Activated CD4-positive, alpha-beta T cell treated with anti-CD3 and anti-CD28 coated beads for 36 hours (primary cell): ENCODE measurements at regions of chr6 and their contacts with region 1.

Region 1: GRCh38 chr6:138953451-138953850 is 34.6 kb downstream of the REPS1 start:
- DNase-seq: no peak
- ATAC-seq: peak; percentile 42
- H3K4me3 Mint-ChIP-seq: no peak overlapping the region
- H3K27ac Mint-ChIP-seq: no peak overlapping the region
- H3K4me1 Mint-ChIP-seq: peaks cover 73% of the 10 kb centered on the region
- H3K27me3 Mint-ChIP-seq: no peaks in the 10 kb centered on the region

Region 2: GRCh38 chr6:138970856-138971425 is 17.5 kb after region 1 on chr6:
- CTCF ChIA-PET with region 1: interaction called, 4 read pairs
- POLR2A ChIA-PET with region 1: no interaction called
- intact Hi-C with region 1: loop called in 1 of 2 experiments (anchors 2 kb)
- DNase-seq: peak; percentile 52
- ATAC-seq: peak; percentile 98
- H3K4me3 Mint-ChIP-seq: no peak overlapping the region
- H3K27ac Mint-ChIP-seq: peak overlapping the region; percentile 49
- H3K4me1 Mint-ChIP-seq: peaks cover 65% of the 10 kb centered on the region
- H3K27me3 Mint-ChIP-seq: no peaks in the 10 kb centered on the region

Region 3: DNA sequence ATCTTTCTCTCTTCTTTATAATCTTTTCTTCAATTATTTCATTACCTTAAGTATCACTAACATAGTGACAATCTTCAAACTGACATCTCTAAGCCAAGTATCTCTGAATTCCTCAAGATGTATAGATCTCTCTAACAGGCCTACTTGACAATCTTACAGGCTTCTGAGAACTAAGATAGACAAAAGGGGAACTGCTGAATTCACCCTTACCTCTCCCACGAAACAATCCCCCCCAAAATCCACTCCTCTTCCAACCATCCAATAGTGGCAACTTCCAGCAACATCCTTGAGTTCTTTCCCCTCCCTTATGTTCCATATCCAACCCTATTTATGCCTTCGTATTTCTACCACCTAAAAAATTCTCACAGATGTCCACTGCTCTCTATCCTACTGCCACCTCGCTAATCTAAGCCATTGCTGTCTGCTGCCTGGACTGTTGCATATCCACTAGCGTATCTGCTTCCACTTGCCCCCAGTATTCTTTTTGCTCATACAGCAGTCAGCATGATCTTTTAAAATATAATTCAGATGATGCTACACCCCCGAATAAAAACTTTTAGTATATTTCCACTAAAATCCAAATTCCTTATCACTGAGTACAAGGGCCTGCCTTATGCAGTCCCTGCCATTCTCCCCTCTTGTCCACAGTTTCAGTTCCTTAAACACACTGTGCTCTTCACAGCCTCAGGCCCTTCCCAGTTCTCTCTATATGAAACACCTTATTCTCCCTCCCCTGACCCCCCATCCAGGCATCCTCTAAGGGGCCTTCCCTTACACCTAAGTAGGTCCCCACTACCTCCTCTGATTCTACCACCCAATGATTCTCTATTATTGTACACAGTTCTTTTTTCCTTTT is 26.6 kb after region 1 on chr6:
- CTCF ChIA-PET with region 1: interaction called, 3 read pairs
- POLR2A ChIA-PET with region 1: no interaction called
- intact Hi-C with region 1: loop called in 1 of 2 experiments (anchors 2 kb)
- DNase-seq: no peak
- ATAC-seq: no peak
- H3K4me3 Mint-ChIP-seq: no peak overlapping the region
- H3K27ac Mint-ChIP-seq: no peak overlapping the region
- H3K4me1 Mint-ChIP-seq: peaks cover 50% of the 10 kb centered on the region
- H3K27me3 Mint-ChIP-seq: no peaks in the 10 kb centered on the region